WTC11 (cell line): ENCODE measurements at regions of chr16 and their contacts with region 1.

Region 1: DNA sequence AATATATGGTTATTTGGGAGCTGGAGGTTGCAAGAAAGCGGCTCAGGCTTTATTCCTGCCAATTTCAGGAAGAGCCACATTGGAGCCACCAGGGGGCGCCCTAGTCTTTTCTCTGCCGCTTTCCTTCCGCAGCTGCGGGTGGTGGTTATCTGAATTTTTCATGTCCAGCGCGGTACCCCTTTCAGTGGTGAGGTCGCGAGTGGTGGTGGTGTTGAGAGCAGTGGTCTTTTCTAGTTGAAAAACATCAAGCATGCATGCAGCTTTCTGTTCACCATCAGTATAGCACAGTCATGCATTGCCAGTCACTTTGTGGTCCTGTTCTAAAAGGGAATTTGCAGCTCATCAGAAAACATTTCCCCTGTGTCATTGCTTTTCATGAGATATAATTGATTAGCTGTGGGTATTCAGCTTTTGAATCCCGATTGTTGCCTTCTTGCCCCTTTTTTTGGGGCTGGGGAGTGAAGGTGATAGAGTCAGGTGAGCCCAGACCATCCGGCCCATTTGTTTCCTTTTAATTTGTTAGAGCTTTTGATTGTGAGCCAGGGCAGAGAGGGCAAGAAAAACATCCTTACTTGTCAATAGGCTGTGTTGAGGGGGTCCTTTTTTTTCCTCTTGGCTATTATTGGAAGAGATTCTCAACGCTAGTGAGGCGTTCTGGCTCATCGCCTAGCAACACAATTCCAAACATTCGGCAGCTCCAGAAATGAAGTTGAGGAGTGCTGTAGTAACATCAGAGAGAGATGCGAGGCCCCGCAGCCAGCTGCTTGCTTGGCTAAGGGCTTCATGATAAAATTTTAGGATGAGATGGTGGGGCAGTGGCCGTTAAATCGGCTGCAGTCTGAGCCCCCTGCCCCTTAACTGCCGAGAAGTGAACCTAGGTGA is 119.0 kb downstream of the SNX29 start:
- DNase-seq: peak; percentile 67
- ATAC-seq: no peak
- H3K4me3 Mint-ChIP-seq: no peak overlapping the region
- H3K27ac Mint-ChIP-seq: no peak overlapping the region
- H3K4me1 Mint-ChIP-seq: peaks cover 62% of the 10 kb centered on the region
- H3K27me3 Mint-ChIP-seq: peaks cover 8% of the 10 kb centered on the region
- CTCF ChIP-seq: peak; percentile 91

Region 2: GRCh38 chr16:12017558-12017957 is 78.0 kb before region 1 on chr16:
- CTCF ChIA-PET with region 1: no interaction called
- POLR2A ChIA-PET with region 1: no interaction called
- DNase-seq: no peak
- ATAC-seq: no peak
- H3K4me3 Mint-ChIP-seq: no peak overlapping the region
- H3K27ac Mint-ChIP-seq: no peak overlapping the region
- H3K4me1 Mint-ChIP-seq: no peaks in the 10 kb centered on the region
- H3K27me3 Mint-ChIP-seq: no peaks in the 10 kb centered on the region
- CTCF ChIP-seq: no peak

Region 3: GRCh38 chr16:12111223-12111622 is 15.7 kb after region 1 on chr16:
- CTCF ChIA-PET with region 1: interaction called, 18 read pairs
- POLR2A ChIA-PET with region 1: interaction called, 3 read pairs
- DNase-seq: no peak
- ATAC-seq: no peak
- H3K4me3 Mint-ChIP-seq: no peak overlapping the region
- H3K27ac Mint-ChIP-seq: no peak overlapping the region
- H3K4me1 Mint-ChIP-seq: no peaks in the 10 kb centered on the region
- H3K27me3 Mint-ChIP-seq: no peaks in the 10 kb centered on the region
- CTCF ChIP-seq: no peak

Region 4: DNA sequence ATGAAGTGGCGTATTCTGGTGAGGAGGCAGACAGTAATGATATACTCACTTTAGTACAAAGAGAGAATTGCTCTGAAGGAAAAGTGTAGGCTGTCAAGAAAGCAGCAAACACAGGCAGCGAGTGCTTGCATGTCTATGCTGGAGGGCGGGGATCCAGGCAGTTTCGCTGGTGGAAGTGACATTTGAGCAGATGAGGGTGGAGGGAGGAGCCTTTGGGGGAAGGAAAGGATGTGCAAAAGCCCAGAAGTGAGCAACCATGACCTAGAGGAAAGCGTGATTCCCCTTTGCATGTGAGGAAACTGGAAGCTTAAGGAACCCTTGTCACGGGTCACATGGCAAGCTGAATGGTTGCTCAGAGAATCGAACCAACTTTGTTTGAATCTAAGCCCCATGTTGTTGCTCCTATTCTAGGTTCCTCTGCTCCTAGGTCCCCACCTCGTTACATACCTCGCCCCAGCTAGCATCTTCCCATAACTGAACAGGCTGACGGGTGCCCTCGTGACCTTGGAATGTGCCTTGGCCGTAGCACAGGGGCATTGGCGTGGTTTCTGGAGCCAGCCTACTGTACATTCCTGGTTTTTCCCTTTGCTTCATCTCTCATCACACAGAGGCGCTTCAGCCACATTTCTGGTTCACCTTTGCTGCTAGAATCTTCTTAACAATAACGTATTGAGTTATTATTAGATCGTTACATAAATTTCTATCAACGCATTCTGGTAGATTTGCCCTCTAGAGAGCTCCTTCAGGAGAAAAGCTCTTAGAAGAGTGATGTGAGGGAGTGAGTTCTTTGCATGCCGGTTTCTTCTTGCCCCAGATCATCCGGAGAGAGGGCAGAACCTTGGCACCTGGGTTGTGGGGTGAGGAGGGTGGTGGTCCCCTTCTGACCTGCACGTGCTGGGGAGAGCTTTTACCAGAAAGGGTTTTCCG is 72.8 kb after region 1 on chr16:
- CTCF ChIA-PET with region 1: interaction called, 21 read pairs
- POLR2A ChIA-PET with region 1: no interaction called
- DNase-seq: no peak
- ATAC-seq: no peak
- H3K4me3 Mint-ChIP-seq: no peak overlapping the region
- H3K27ac Mint-ChIP-seq: no peak overlapping the region
- H3K4me1 Mint-ChIP-seq: no peaks in the 10 kb centered on the region
- H3K27me3 Mint-ChIP-seq: no peaks in the 10 kb centered on the region
- CTCF ChIP-seq: no peak

Region 5: GRCh38 chr16:12203780-12204351 is 108.3 kb after region 1 on chr16:
- CTCF ChIA-PET with region 1: interaction called, 10 read pairs
- POLR2A ChIA-PET with region 1: no interaction called
- DNase-seq: no peak
- ATAC-seq: no peak
- H3K4me3 Mint-ChIP-seq: no peak overlapping the region
- H3K27ac Mint-ChIP-seq: no peak overlapping the region
- H3K4me1 Mint-ChIP-seq: 0 out of 2 replicates have a peak, but pooled peaks cover 3% of the 10 kb centered on the region
- H3K27me3 Mint-ChIP-seq: no peaks in the 10 kb centered on the region
- CTCF ChIP-seq: no peak

Region 6: GRCh38 chr16:12228602-12229499 is 133.3 kb after region 1 on chr16:
- CTCF ChIA-PET with region 1: interaction called, 46 read pairs
- POLR2A ChIA-PET with region 1: no interaction called
- DNase-seq: peak; percentile 78
- ATAC-seq: peak; percentile 95
- H3K4me3 Mint-ChIP-seq: no peak overlapping the region
- H3K27ac Mint-ChIP-seq: no peak overlapping the region
- H3K4me1 Mint-ChIP-seq: peaks cover 19% of the 10 kb centered on the region
- H3K27me3 Mint-ChIP-seq: no peaks in the 10 kb centered on the region
- CTCF ChIP-seq: peak; percentile 54; the same call in 1 of the 2 replicates

Region 7: GRCh38 chr16:12271006-12271405 is 175.5 kb after region 1 on chr16:
- CTCF ChIA-PET with region 1: interaction called, 49 read pairs
- POLR2A ChIA-PET with region 1: no interaction called
- DNase-seq: peak; percentile 62
- ATAC-seq: peak; percentile 99
- H3K4me3 Mint-ChIP-seq: no peak overlapping the region
- H3K27ac Mint-ChIP-seq: no peak overlapping the region
- H3K4me1 Mint-ChIP-seq: no peaks in the 10 kb centered on the region
- H3K27me3 Mint-ChIP-seq: no peaks in the 10 kb centered on the region
- CTCF ChIP-seq: no peak